ENCODE measurements at regions of chr16 and their contacts with region 1.

Region 1: DNA sequence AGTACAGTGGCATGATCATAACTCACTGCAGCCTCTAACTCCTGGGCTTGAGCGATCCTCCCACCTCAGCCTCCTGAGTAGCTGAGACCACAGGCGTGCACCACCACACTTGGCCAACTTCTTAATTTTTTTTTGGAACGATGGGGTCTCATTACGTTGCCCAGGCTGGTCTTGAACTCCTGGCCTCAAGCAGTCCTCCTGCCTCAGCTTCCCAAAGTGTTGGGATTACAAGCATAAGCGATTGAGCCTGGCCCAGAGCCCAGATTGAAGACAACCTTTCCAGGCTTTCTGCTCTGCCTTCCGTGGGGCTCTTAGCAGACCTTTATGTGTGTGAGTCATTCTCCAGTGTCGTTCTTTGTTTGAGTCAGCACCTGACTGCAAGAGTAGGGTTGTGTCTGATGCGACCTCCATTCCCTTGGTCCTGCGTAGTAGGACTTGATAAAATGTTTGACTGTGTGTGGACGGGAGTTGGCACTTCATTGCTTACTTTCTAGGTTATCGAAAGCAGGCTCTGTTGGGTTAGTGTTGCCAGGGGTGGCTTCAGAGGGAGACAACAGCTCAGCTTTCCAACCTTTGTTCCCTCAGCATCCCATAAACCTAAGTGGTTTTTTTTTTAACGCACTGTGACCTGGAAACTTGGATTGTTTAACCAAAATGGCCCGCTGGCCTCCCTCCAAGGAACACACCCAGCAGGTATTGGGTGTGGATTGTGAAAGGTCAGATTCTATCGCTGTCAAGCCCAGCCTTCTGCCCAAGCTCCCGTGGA is 26.4 kb downstream of the EEF2K start:
- DNase-seq: peak; percentile 84
- H3K4me3 Mint-ChIP-seq: peak overlapping the region; percentile 64
- H3K27ac Mint-ChIP-seq: peak overlapping the region; percentile 96
- H3K4me1 Mint-ChIP-seq: peaks cover 22% of the 10 kb centered on the region
- H3K27me3 Mint-ChIP-seq: no peaks in the 10 kb centered on the region
- CTCF ChIP-seq: no peak

Region 2: DNA sequence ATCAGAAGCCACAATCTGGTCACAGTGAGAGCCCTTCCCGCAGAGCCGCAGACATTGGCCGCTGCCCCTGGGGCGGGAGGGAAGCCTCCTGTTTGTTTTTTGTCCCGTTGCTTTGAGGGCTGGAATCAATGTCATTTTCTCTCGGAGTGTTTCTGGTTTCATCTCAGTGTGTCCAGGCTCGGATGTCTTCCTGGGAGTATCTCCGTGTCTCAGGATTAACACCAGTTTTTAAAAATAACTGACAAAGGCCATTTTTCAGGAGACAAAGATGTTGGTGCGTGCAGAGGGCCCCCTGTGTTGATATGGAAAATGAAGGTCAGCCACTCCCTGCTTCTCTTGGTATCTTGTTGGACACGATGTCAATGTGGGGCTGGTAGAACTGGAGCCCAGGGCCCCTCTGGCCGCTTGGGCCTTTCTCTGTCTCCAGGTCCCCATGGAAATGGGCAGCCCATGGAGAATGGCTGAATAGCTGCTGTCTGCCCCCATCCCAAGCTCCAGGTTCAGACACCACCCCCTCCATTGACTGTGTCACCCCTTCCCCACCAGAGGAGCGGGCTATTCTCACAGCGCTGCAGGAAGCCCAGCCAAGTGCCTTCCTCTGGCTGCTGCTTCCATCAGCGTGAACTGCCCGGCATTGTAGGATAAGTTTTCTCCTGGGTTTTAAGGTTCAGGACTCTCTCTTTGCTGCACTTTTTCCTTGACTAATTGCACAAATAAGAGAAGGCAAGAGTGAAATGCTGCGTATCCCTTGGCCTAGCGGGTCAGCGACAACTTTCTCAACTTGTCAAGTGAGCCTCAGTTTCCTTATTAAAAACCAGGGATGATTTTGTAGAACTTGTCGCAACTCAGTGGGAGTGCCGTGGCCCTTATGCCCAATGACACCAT is 705.3 kb before region 1 on chr16:
- CTCF ChIA-PET with region 1: no interaction called
- intact Hi-C with region 1: no loop called
- DNase-seq: no peak
- H3K4me3 Mint-ChIP-seq: no peak overlapping the region
- H3K27ac Mint-ChIP-seq: no peak overlapping the region
- H3K4me1 Mint-ChIP-seq: no peaks in the 10 kb centered on the region
- H3K27me3 Mint-ChIP-seq: peaks cover 14% of the 10 kb centered on the region
- CTCF ChIP-seq: no peak

Region 3: GRCh38 chr16:22195695-22196558 is 36.5 kb before region 1 on chr16:
- CTCF ChIA-PET with region 1: interaction called, 3 read pairs
- intact Hi-C with region 1: loop called (anchors 5 kb)
- DNase-seq: peak; percentile 94
- H3K4me3 Mint-ChIP-seq: peak overlapping the region; percentile 67
- H3K27ac Mint-ChIP-seq: peak overlapping the region; percentile 100
- H3K4me1 Mint-ChIP-seq: peaks cover 35% of the 10 kb centered on the region
- H3K27me3 Mint-ChIP-seq: peaks cover 8% of the 10 kb centered on the region
- CTCF ChIP-seq: peak; percentile 94

Region 4: DNA sequence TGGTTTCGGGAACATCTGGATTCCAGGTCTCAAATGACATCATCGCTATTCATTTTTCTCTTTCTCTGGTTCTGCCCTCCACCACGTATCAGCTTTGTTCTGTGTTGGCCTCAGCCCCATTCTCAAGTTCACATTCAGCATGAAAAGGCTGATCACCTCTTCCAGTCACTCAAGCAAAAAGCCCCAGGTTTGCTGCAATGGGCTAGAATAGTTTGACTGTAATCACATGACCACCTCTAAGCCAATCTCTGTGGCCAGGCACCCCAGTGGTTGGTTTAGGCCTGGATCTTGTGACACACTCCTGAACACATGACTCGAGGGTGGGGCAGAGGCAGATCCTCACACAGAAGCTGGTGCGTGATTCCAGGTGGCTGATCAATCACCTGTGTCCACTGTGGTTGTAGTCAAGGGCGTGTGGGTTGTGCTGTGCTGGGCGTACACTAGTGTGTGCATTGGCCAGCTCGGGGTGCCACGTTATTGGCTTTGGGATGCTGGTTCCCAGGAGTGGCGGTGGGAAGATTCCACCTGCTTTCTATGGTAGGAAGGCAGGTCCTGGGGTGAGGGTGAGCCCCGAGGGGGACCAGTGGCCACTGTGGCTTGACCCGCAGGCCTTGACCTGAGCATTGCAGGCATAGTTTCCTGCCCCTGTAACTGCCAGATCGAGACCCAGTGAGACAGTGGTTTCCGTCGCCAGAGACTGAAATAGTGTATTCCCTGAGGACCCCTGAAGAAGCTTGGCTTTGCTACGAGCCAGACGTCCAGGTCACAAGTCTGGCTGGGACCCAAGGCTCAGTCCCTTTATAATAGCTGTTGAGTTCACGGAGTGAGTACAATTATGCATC is 14.3 kb before region 1 on chr16:
- CTCF ChIA-PET with region 1: no interaction called
- intact Hi-C with region 1: no loop called
- DNase-seq: no peak
- H3K4me3 Mint-ChIP-seq: no peak overlapping the region
- H3K27ac Mint-ChIP-seq: no peak overlapping the region
- H3K4me1 Mint-ChIP-seq: peaks cover 16% of the 10 kb centered on the region
- H3K27me3 Mint-ChIP-seq: no peaks in the 10 kb centered on the region
- CTCF ChIP-seq: no peak

Region 5: DNA sequence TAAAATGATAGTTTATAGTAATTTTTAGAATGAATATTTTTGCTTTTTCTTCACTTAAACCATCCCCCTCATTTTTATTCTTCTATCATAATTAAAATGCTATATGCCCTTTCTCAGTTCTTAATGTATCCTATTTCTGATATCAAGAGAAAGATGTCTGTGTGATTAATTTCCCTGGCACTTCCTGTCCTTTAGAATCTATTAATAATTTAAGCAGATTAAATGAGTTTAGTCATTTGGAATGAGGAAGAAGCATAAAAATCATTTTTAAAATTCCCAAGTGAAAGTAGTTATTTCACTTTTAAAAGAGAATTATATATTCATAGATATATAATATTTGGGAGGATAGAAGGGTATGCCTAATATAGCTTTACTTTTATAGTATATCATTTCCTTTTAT is 169.7 kb after region 1 on chr16:
- CTCF ChIA-PET with region 1: no interaction called
- intact Hi-C with region 1: no loop called
- DNase-seq: no peak
- H3K4me3 Mint-ChIP-seq: peak overlapping the region; percentile 41
- H3K27ac Mint-ChIP-seq: peak overlapping the region; percentile 97
- H3K4me1 Mint-ChIP-seq: peaks cover 58% of the 10 kb centered on the region
- H3K27me3 Mint-ChIP-seq: no peaks in the 10 kb centered on the region
- CTCF ChIP-seq: no peak